Breast epithelium (tissue), 4 donors: ENCODE measurements at regions of chr10 and their contacts with region 1.

Region 1: DNA sequence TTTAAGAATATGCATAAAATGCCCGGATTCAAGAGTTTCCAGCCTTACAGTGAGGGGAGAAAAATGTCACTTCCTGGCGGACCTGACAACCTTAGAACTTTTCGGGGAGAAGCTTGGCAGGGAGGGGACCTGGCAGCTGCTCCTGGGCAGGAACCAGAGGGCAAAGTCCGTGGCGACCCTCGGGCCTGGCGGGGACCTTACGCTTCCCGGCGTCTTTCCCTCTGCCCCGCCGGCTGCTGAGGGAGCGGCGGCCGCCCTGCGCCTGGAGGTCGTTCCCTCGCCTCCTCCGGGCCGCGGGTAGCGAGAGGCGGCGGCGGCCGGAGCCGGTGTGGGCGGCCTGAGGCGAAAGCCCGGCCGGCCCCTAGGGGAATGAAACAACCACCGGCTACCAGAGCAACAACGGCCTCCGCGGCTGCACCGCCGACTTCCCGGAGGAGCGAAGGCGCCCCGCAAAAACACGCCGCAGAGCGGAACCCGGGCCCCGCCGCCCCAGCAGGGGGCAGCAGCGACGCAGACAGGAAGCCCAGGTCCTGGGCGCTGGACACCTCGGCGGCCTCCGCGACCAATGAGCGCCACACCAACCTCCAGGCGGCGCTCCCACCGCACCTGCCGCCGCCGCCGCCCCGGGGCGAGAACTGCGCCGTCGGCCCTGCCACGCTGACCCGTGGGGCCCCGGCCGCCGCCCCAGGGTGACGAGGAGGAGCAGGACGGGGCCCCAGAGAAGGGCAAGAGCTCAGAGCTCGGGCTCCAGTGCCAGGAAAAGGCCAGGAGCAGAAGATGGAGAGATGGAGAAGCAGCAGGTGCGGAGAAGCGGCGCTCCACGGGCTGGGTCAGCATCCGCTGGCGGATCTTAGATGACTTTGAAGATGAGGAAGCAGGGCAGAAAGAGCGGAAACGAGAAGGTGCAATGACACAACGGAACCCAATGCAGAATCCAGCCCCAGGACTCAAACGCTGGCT is 10.5 kb upstream of the ACSM6 start:
- DNase-seq: peak; percentile 72
- H3K4me3 ChIP-seq: peak overlapping the region; percentile 55 to 75 (median 68)
- H3K27ac ChIP-seq: peak overlapping the region; percentile 80 to 86
- H3K4me1 ChIP-seq: no peaks in the 10 kb centered on the region
- H3K27me3 ChIP-seq: no peaks in the 10 kb centered on the region
- CTCF ChIP-seq: peak; percentile 68 to 80 (median 75)
- POLR2A ChIP-seq: no peak

Region 2: GRCh38 chr10:95341716-95342130 is 158.2 kb after region 1 on chr10:
- intact Hi-C with region 1: loop called (anchors 10 kb)
- DNase-seq: no peak
- H3K4me3 ChIP-seq: no peak overlapping the region
- H3K27ac ChIP-seq: no peak overlapping the region
- H3K4me1 ChIP-seq: no peaks in the 10 kb centered on the region
- H3K27me3 ChIP-seq: no peaks in the 10 kb centered on the region
- CTCF ChIP-seq: no peak
- POLR2A ChIP-seq: no peak

Region 3: GRCh38 chr10:95499482-95499989 is 316.0 kb after region 1 on chr10:
- intact Hi-C with region 1: no loop called
- DNase-seq: no peak
- H3K4me3 ChIP-seq: no peak overlapping the region
- H3K27ac ChIP-seq: no peak overlapping the region
- H3K4me1 ChIP-seq: peaks cover 0 to 10% of the 10 kb centered on the region in 2 donors
- H3K27me3 ChIP-seq: no peaks in the 10 kb centered on the region
- CTCF ChIP-seq: no peak
- POLR2A ChIP-seq: no peak